CD14-positive monocyte (primary cell): ENCODE measurements at regions of chr17 and their contacts with region 1.

Region 1: DNA sequence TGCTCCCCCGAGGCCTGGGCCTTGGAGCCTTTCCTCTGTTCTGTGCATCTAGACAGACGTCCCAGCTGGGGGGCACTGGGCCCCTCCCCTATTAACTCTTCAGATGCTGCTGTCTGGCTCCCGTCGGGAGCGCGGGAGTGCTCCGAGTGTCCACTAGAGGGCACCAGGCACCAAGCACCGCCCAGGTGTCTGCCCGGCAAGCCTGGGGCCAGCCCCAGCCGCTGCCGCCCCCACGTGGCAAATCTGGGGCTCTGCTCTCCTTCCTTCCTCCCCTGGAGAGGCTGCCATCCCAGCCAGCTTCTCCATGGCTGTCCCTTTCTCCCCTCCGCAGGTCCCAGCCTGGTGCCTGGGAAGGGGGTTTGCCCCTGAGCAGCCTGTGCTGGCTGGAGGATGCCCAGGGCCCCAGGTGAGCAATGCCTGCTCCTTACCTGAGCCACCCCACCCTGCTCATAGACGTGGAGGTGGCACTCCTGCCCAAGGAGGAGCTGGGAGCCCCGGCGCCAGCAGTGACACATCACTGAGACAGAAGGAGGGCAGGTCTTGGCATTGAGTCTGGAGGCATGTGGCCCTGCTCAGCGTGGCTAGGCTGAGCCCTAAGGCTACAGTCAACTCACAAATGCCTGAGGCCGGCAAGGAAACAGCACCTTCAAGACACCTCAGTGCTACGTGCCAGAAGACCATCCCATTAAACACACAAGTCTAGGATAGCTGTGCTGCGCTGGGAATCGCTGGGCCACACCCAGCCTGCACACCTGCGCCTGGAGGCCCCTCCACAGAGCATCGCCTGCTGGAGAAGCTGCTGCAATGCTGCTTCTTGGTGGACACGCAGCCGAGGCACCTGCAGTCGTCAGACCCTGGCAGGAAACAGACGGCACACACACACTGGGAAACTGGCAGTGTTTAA is 19.7 kb downstream of the TMEM235 start:
- DNase-seq: peak; percentile 83 to 88 (median 87)
- H3K4me3 ChIP-seq: no peak overlapping the region
- H3K4me3 Mint-ChIP-seq: peak overlapping the region in 1 of 2 donors; percentile 39
- H3K27ac ChIP-seq: no peak overlapping the region
- H3K27ac Mint-ChIP-seq: peak overlapping the region in 3 of 7 donors; percentile 30 to 80 (median 57)
- H3K4me1 ChIP-seq: peaks cover 20 to 31% of the 10 kb centered on the region in 2 donors
- H3K4me1 Mint-ChIP-seq: peaks cover 21% of the 10 kb centered on the region
- H3K27me3 ChIP-seq: peaks cover 0 to 10% of the 10 kb centered on the region in 2 donors
- H3K27me3 Mint-ChIP-seq: peaks cover 7 to 10% (median 8%) of the 10 kb centered on the region in 3 donors
- CTCF ChIP-seq: peak; percentile 100

Region 2: DNA sequence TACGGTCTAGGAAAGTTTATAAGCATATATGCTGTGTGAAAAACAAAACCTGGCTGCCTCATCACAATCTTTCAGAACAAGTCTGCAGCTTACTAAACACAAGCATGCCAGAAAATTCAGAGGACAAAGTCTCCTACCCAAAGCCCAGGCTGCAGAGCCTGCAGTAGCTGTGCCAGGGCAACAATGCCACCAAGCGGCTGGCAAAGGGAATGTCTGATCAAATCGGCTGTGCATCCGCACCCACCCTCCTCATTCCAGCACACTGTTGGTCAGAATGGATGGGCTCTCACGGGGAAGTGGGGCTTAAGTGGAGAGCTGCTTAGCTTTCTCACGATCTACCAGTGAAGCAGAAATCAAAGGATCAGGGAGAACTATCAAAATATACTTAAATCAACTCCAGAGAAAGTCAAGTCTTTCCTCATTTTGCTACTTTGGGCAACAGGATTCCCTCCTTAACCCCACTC is 457.4 kb after region 1 on chr17:
- intact Hi-C with region 1: loop called in 1 of 2 experiments (anchors 5 kb)
- DNase-seq: peak; percentile 48 to 60 (median 60)
- H3K4me3 ChIP-seq: no peak overlapping the region
- H3K4me3 Mint-ChIP-seq: no peak overlapping the region
- H3K27ac ChIP-seq: peak overlapping the region in 1 of 2 donors; percentile 18
- H3K27ac Mint-ChIP-seq: peak overlapping the region in 6 of 7 donors; percentile 47 to 78 (median 71)
- H3K4me1 ChIP-seq: peaks cover 8 to 10% of the 10 kb centered on the region in 2 donors
- H3K4me1 Mint-ChIP-seq: peaks cover 25% of the 10 kb centered on the region
- H3K27me3 ChIP-seq: no peaks in the 10 kb centered on the region
- H3K27me3 Mint-ChIP-seq: no peaks in the 10 kb centered on the region
- CTCF ChIP-seq: peak; percentile 94